Aorta (tissue), 5 donors: ENCODE measurements at regions of chr3 and their contacts with region 1.

Region 1: GRCh38 chr3:33392703-33393125 is 47.5 kb downstream of the UBP1 start:
- DNase-seq: peak in 1 of 2 donors; percentile 52
- ATAC-seq: no peak
- H3K4me3 ChIP-seq: no peak overlapping the region
- H3K27ac ChIP-seq: no peak overlapping the region
- H3K4me1 ChIP-seq: peaks cover 0 to 3% of the 10 kb centered on the region in 2 donors
- H3K27me3 ChIP-seq: no peaks in the 10 kb centered on the region

Region 2: GRCh38 chr3:33277193-33277882 is 115.4 kb before region 1 on chr3 and contains the start of gene FBXL2:
- intact Hi-C with region 1: no loop called
- DNase-seq: peak; percentile 79 to 91
- ATAC-seq: peak; percentile 86
- H3K4me3 ChIP-seq: peak within 1 kb of the TSS; percentile 62 to 83
- H3K27ac ChIP-seq: no peak within 1 kb of the TSS
- H3K4me1 ChIP-seq: peaks cover 0 to 2% of the 10 kb centered on the region in 2 donors
- H3K27me3 ChIP-seq: no peaks in the 10 kb centered on the region
- total RNA-seq, gene FBXL2: 21.9 to 23.8 TPM

Region 3: GRCh38 chr3:33433843-33434242 is 41.1 kb after region 1 on chr3:
- intact Hi-C with region 1: loop called in 1 of 2 experiments (anchors 5 kb)
- DNase-seq: no peak
- ATAC-seq: no peak
- H3K4me3 ChIP-seq: no peak overlapping the region
- H3K27ac ChIP-seq: no peak overlapping the region
- H3K4me1 ChIP-seq: peaks cover 4 to 9% of the 10 kb centered on the region in 2 donors
- H3K27me3 ChIP-seq: no peaks in the 10 kb centered on the region

Region 4: DNA sequence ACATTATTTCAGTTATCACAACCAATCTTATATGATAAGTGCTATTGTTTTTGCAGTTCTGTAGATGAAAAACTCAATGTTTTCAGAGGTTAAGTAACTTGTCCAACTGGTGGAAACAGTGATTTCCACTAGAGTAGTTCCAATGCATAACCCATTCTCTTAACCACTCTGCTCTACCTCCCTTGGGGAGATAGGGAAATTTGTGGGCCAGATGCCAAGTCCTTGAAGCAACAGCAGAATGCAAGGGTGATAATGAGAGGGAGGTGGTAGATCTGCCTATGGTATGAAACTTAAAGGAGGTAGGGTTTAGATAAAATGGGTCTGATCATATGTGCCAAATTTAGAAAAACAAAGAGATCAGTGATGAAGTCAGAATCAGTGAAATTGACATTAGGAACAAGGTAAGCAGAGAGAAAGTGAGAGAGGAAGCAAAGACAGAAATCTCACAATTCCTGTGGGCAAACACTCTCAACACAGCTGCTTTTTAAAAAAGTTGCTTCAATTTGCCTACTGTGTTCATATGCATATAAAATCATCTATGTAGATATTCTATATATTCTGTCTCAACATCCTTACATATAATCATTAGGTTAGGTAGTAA is 98.0 kb after region 1 on chr3:
- intact Hi-C with region 1: no loop called
- DNase-seq: no peak
- ATAC-seq: no peak
- H3K4me3 ChIP-seq: no peak overlapping the region
- H3K27ac ChIP-seq: no peak overlapping the region
- H3K4me1 ChIP-seq: no peaks in the 10 kb centered on the region
- H3K27me3 ChIP-seq: no peaks in the 10 kb centered on the region